ENCODE measurements at regions of chr15 and their contacts with region 1.

Region 1: DNA sequence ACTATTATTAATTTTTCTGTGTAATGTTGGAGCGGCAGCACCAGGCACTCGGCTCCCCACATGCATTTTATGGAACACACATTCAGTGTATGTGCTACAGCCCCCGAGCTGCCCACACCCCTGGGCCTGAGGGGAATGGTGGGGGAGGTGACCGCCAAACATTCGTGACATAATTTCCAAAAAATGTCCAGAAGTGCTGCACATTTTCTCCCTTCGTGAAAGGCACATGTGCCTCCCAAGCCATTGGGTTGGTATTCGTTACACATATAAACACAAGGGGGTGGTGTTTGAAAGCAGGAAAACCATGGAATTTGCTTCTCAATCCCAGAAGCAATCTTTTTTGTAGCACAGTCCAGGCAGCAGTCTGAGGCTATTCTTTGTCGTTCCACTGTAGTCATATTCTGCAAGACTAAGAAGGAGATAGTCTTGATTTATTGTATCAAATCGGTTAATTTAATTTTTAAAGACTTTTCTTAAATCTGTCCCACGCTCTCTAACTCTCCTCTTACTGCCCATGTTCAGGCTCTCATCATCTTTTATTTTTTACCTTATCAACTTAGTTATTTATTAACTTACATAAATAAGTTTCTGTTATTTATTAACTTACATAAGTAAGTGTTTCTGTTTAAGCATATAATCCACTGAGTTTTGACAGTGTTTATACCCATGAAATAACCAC is 39.2 kb upstream of the POLR2M start:
- DNase-seq: peak in 2 of 5 donors; percentile 18 to 29
- H3K4me3 ChIP-seq: no peak overlapping the region
- H3K27ac ChIP-seq: no peak overlapping the region
- H3K4me1 ChIP-seq: peaks cover 2% of the 10 kb centered on the region
- H3K27me3 ChIP-seq: no peaks in the 10 kb centered on the region
- CTCF ChIP-seq: peak in 2 of 3 donors; percentile 24 to 32
- EP300 ChIP-seq: no peak
- POLR2A ChIP-seq: no peak

Region 2: DNA sequence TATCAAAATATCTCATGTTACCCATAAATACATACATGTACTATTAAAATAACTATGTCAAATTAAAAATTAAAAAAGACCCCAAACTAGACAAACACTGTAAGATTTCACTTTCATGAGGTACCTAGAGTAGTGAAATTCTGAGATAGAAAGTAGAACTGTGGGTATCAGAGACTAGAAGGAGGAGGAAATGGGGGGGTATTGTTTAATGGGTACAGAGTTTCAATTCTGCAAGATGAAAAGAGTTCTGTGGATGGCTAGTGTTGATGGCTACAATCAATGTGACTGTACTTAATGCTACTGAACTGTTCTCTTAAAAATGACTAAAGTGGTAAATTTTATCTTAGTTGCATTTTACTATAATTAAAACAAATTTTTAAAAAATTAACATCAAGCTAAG is 1460.2 kb before region 1 on chr15:
- intact Hi-C with region 1: no loop called
- DNase-seq: no peak
- H3K4me3 ChIP-seq: no peak overlapping the region
- H3K27ac ChIP-seq: no peak overlapping the region
- H3K4me1 ChIP-seq: peaks cover 4% of the 10 kb centered on the region
- H3K27me3 ChIP-seq: no peaks in the 10 kb centered on the region
- CTCF ChIP-seq: no peak
- EP300 ChIP-seq: no peak
- POLR2A ChIP-seq: no peak

Region 3: DNA sequence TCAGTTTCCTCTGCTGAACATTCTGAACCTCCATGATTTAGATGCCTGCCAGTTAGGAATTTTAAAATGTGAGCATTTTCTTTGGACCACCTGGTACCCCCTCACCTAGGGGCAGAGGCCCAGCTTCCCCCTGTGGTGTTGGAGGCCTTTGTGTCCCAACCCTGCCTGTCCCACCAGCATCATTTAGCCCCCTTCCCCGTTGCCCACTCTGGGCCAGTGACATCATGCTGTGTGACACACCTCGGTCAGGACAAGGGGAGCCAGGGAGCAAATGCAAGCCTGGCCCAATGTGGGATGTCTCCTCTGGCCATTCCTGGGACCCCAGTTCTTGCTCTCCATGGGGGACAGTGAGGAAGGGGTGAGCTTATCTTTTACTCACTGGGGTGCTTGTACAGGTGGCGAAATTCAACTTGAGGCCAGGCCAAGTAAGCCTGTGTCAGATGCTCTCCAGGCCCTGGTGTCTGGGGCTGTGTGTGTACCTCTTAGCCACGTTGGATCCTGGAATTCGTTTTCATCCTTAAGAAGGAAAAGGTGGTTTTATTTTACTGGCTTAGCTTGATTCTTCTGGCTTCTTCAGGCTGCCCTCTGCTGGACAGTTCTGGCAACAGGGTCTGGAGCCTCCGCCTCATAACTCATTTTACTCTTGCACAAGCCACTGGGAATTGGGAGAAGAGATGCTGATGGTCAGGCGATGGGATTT is 125.4 kb before region 1 on chr15:
- intact Hi-C with region 1: no loop called
- DNase-seq: peak; percentile 56 to 80 (median 70)
- H3K4me3 ChIP-seq: no peak overlapping the region
- H3K27ac ChIP-seq: no peak overlapping the region
- H3K4me1 ChIP-seq: no peaks in the 10 kb centered on the region
- H3K27me3 ChIP-seq: no peaks in the 10 kb centered on the region
- CTCF ChIP-seq: peak; percentile 39 to 42 (median 39)
- EP300 ChIP-seq: no peak
- POLR2A ChIP-seq: no peak

Region 4: GRCh38 chr15:57743424-57743823 is 76.1 kb after region 1 on chr15:
- intact Hi-C with region 1: loop called in 3 of 4 experiments (anchors 5 to 10 kb)
- DNase-seq: no peak
- H3K4me3 ChIP-seq: no peak overlapping the region
- H3K27ac ChIP-seq: no peak overlapping the region
- H3K4me1 ChIP-seq: no peaks in the 10 kb centered on the region
- H3K27me3 ChIP-seq: no peaks in the 10 kb centered on the region
- CTCF ChIP-seq: no peak
- EP300 ChIP-seq: no peak
- POLR2A ChIP-seq: no peak

Region 5: DNA sequence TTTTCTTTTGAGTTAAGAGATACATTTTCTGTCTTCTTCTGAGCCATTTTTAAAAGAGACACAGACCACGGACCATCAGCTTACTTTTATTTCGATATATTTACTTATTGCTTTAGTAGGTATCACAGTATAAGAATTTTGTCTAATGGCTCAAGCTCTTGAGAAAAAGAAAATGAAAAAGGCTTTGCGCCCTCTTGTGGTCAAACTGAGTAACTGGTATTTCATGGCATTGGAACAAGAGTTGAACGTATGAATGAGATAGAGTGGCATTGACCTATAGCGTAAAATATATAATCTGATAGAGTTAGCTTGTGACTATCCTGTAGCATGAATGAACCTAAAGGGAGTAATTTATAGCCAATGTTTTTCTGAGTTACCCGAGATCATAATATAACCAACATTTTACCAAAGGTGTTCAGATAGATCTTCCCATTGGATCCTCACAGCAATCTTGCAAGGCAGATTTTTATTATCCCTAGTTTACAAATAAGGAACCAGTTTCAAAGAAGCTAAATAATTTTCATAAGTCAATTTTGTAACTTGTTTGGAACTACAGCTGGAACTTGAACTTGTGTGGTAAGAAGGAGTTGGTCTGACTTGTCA is 193.8 kb after region 1 on chr15:
- intact Hi-C with region 1: loop called in 1 of 4 experiments (anchors 5 kb)
- DNase-seq: no peak
- H3K4me3 ChIP-seq: no peak overlapping the region
- H3K27ac ChIP-seq: no peak overlapping the region
- H3K4me1 ChIP-seq: no peaks in the 10 kb centered on the region
- H3K27me3 ChIP-seq: no peaks in the 10 kb centered on the region
- CTCF ChIP-seq: peak; percentile 40 to 56 (median 48)
- EP300 ChIP-seq: no peak
- POLR2A ChIP-seq: no peak